ENCODE measurements at regions of chr5 and their contacts with region 1.

Region 1: GRCh38 chr5:50962934-50963872 is 296.8 kb downstream of the PARP8 start:
- DNase-seq: peak in 1 of 2 experiments; percentile 77
- H3K4me3 ChIP-seq: peak overlapping the region; percentile 53
- H3K27ac ChIP-seq: no peak overlapping the region
- H3K4me1 ChIP-seq: no peaks in the 10 kb centered on the region
- H3K27me3 ChIP-seq: 0 out of 2 replicates have a peak, but pooled peaks cover 3% of the 10 kb centered on the region
- CTCF ChIP-seq: peak; percentile 97

Region 2: GRCh38 chr5:51382763-51383490 is 419.7 kb after region 1 on chr5 and contains the start of gene ISL1:
- CTCF ChIA-PET with region 1: interaction called, 5 read pairs
- POLR2A ChIA-PET with region 1: no interaction called
- intact Hi-C with region 1: loop called (anchors 1 kb)
- DNase-seq: no peak
- H3K4me3 ChIP-seq: no peak within 1 kb of the TSS
- H3K27ac ChIP-seq: no peak within 1 kb of the TSS
- H3K4me1 ChIP-seq: no peaks in the 10 kb centered on the region; the same call in 1 of the 2 replicates
- H3K27me3 ChIP-seq: no peaks in the 10 kb centered on the region
- CTCF ChIP-seq: no peak
- total RNA-seq, gene ISL1: not detected in 2 replicates

Region 3: GRCh38 chr5:51684794-51685355 is 721.7 kb after region 1 on chr5:
- CTCF ChIA-PET with region 1: no interaction called
- POLR2A ChIA-PET with region 1: no interaction called
- intact Hi-C with region 1: loop called (anchors 1 kb)
- DNase-seq: no peak
- H3K4me3 ChIP-seq: no peak overlapping the region
- H3K27ac ChIP-seq: no peak overlapping the region
- H3K4me1 ChIP-seq: no peaks in the 10 kb centered on the region
- H3K27me3 ChIP-seq: no peaks in the 10 kb centered on the region
- CTCF ChIP-seq: peak; percentile 52

Region 4: DNA sequence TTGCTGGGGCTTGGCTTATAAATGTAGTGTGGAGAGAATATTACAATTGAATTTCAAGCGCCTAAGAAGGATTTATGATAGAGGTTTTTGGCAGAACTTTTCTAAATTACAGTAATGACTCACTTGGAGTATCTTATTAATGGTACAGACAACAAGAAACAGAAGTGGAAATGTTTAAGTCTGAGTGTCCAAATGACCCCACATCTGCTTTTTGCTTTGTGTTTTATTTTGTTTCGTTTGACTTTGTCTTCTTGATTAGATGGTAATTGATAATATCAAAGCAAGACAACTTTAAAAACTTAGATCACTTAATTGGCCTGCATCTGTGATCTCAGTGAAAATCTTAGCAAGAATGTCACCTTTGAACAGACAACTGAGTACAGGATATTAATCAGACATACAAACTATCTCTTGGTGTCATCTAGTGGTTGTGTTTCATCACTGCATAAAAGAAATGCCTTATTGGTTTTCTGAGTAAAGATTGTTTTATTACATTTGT is 997.5 kb after region 1 on chr5:
- CTCF ChIA-PET with region 1: interaction called, 3 read pairs
- POLR2A ChIA-PET with region 1: no interaction called
- intact Hi-C with region 1: loop called (anchors 1 kb)
- DNase-seq: no peak
- H3K4me3 ChIP-seq: no peak overlapping the region
- H3K27ac ChIP-seq: no peak overlapping the region
- H3K4me1 ChIP-seq: no peaks in the 10 kb centered on the region
- H3K27me3 ChIP-seq: no peaks in the 10 kb centered on the region
- CTCF ChIP-seq: peak; percentile 72

Region 5: DNA sequence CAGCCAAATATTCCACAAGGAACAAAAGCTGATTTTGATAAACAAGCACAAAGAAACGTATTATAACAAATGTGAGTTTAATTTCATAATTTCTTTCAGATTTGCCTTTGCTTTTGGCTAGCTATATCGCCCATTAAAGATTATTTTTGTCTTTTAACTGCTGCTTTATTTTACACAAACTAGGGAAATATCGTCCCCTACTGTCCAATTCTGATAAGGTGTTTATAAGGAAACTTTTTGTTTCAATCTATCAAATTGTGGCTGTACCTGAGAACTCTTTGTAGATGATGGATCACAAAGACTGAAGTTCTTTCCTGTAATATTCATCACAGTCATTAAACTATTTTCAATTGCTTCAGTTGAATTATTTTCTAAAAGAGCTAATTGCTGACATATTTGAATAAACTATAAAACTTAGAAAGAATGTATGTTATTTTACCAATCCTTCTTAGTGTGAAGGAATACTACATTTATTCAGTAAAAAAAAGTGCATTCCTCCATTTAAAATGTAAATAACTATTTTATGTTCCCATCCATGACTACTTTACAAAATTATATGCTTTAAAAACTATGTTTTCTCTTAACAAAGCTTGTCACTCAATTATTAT is 1393.2 kb after region 1 on chr5:
- CTCF ChIA-PET with region 1: interaction called, 3 read pairs
- POLR2A ChIA-PET with region 1: no interaction called
- intact Hi-C with region 1: loop called (anchors 1 kb)
- DNase-seq: no peak
- H3K4me3 ChIP-seq: no peak overlapping the region
- H3K27ac ChIP-seq: no peak overlapping the region
- H3K4me1 ChIP-seq: no peaks in the 10 kb centered on the region
- H3K27me3 ChIP-seq: no peaks in the 10 kb centered on the region
- CTCF ChIP-seq: peak; percentile 81

Region 6: DNA sequence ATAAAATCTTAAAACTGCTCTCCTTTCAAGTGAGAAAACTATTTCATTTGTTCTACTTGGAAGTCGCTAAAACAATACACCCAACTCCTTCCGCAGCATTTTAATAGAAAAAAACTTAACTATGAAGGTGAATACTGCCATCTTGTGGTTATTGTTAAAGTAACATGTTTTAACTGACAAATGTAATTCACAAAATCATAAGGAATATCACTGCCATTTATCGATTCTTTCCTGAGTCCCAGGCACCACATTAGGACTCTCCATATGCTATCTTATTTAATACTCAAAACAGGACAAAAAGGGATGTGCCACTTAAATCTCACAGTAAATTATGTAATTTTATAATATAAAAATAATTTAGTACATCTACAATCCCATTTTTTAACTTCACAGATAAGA is 1694.0 kb after region 1 on chr5:
- CTCF ChIA-PET with region 1: no interaction called
- POLR2A ChIA-PET with region 1: no interaction called
- intact Hi-C with region 1: loop called (anchors 1 kb)
- DNase-seq: peak in 1 of 2 experiments; percentile 43
- H3K4me3 ChIP-seq: no peak overlapping the region
- H3K27ac ChIP-seq: no peak overlapping the region
- H3K4me1 ChIP-seq: no peaks in the 10 kb centered on the region
- H3K27me3 ChIP-seq: no peaks in the 10 kb centered on the region
- CTCF ChIP-seq: peak; percentile 74

Measured in PC-9 (cell line).